ENCODE measurements at regions of chr6 and their contacts with region 1.

Region 1: GRCh38 chr6:110873981-110874879 is at the start of gene AMD1:
- DNase-seq: peak; percentile 99

Region 2: GRCh38 chr6:110682460-110682853 is 191.8 kb before region 1 on chr6:
- CTCF ChIA-PET with region 1: interaction called, 10 read pairs
- POLR2A ChIA-PET with region 1: interaction called, 16 read pairs
- DNase-seq: peak; percentile 74

Region 3: GRCh38 chr6:110815217-110816109 is 58.8 kb before region 1 on chr6 and contains the start of gene CDK19:
- CTCF ChIA-PET with region 1: no interaction called
- POLR2A ChIA-PET with region 1: interaction called, 93 read pairs
- DNase-seq: peak; percentile 96

Region 4: GRCh38 chr6:110853754-110854477 is 20.3 kb before region 1 on chr6:
- CTCF ChIA-PET with region 1: interaction called, 3 read pairs
- POLR2A ChIA-PET with region 1: interaction called, 18 read pairs
- DNase-seq: no peak

Region 5: GRCh38 chr6:110890288-110890687 is 16.1 kb after region 1 on chr6:
- CTCF ChIA-PET with region 1: interaction called, 5 read pairs
- POLR2A ChIA-PET with region 1: interaction called, 63 read pairs
- DNase-seq: no peak

Region 6: GRCh38 chr6:110958329-110959192 is 84.3 kb after region 1 on chr6 and contains the start of gene GTF3C6:
- CTCF ChIA-PET with region 1: no interaction called
- POLR2A ChIA-PET with region 1: interaction called, 30 read pairs
- DNase-seq: peak; percentile 92

Measured in HEK293T (cell line).